CD4-positive, alpha-beta memory T cell (primary cell): ENCODE measurements at regions of chr17 and their contacts with region 1.

Region 1: GRCh38 chr17:17812211-17813057 is 24.4 kb downstream of the SREBF1 start:
- DNase-seq: peak in 4 of 5 donors; percentile 58 to 71 (median 62)
- H3K4me3 ChIP-seq: no peak overlapping the region
- H3K4me3 Mint-ChIP-seq: no peak overlapping the region
- H3K27ac ChIP-seq: peak overlapping the region; percentile 8
- H3K27ac Mint-ChIP-seq: peak overlapping the region in 5 of 7 donors; percentile 24 to 60 (median 53)
- H3K4me1 ChIP-seq: peaks cover 8% of the 10 kb centered on the region
- H3K4me1 Mint-ChIP-seq: peaks cover 0 to 12% (median 2%) of the 10 kb centered on the region in 4 donors
- H3K27me3 ChIP-seq: no peaks in the 10 kb centered on the region
- H3K27me3 Mint-ChIP-seq: no peaks in the 10 kb centered on the region

Region 2: DNA sequence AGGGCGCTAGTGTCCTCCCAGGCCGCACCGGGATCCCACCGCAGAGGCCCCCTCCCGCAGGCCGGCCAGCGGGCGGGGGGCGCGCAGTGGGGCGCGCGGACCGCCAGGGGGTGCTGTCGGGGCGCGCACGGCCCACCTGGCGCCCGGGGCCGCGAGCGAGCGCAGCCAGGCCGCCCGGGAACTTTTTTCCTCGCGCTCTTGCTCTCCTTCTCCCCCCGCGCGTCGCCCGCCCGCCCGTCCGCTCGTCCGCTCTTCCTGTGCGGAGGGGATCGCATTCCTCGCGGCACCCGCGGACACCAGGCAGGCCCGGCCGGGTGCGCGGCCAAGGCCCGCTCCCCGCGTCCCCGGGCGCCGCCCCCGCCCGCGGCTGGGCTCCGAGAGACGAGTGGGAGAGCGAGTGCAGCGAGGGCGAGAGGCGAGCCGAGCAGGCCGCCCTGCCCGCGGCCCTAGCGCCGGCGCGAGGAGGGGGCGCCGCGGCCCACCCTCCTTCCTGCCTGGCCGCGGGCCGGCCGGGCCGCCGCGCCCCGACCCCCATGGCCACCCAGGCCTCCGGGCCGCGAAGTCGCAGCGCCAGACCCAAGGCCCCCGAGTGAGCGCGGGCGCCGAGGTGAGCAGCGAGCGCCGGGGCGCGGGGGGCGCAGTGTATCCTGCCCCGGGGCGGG is 131.1 kb before region 1 on chr17 and contains the start of gene RAI1:
- CTCF ChIA-PET with region 1: interaction called, 9 read pairs
- POLR2A ChIA-PET with region 1: interaction called, 3 read pairs
- intact Hi-C with region 1: loop called (anchors 1 kb)
- DNase-seq: peak; percentile 74 to 81 (median 78)
- H3K4me3 ChIP-seq: peak within 1 kb of the TSS in 1 of 2 donors; percentile 76
- H3K4me3 Mint-ChIP-seq: peak within 1 kb of the TSS; percentile 74 to 90 (median 88)
- H3K27ac ChIP-seq: peak within 1 kb of the TSS; percentile 71
- H3K27ac Mint-ChIP-seq: peak within 1 kb of the TSS; percentile 42 to 91 (median 86)
- H3K4me1 ChIP-seq: peaks cover 27% of the 10 kb centered on the region
- H3K4me1 Mint-ChIP-seq: peaks cover 9 to 38% (median 24%) of the 10 kb centered on the region in 4 donors
- H3K27me3 ChIP-seq: no peaks in the 10 kb centered on the region
- H3K27me3 Mint-ChIP-seq: peaks cover 0 to 5% of the 10 kb centered on the region in 2 donors
- total RNA-seq, gene RAI1: 15.4 to 19.5 TPM

Region 3: GRCh38 chr17:17836250-17836817 is 23.9 kb after region 1 on chr17:
- CTCF ChIA-PET with region 1: interaction called, 17 read pairs
- POLR2A ChIA-PET with region 1: interaction called, 4 read pairs
- intact Hi-C with region 1: loop called (anchors 1 kb)
- DNase-seq: peak; percentile 95 to 98 (median 97)
- H3K4me3 ChIP-seq: peak overlapping the region; percentile 48 to 64
- H3K4me3 Mint-ChIP-seq: peak overlapping the region; percentile 73 to 93 (median 89)
- H3K27ac ChIP-seq: peak overlapping the region; percentile 98
- H3K27ac Mint-ChIP-seq: peak overlapping the region; percentile 95 to 99 (median 98)
- H3K4me1 ChIP-seq: peaks cover 57% of the 10 kb centered on the region
- H3K4me1 Mint-ChIP-seq: peaks cover 35 to 78% (median 62%) of the 10 kb centered on the region in 4 donors
- H3K27me3 ChIP-seq: no peaks in the 10 kb centered on the region
- H3K27me3 Mint-ChIP-seq: no peaks in the 10 kb centered on the region

Region 4: GRCh38 chr17:17859909-17860765 is 47.7 kb after region 1 on chr17:
- CTCF ChIA-PET with region 1: interaction called, 234 read pairs
- POLR2A ChIA-PET with region 1: no interaction called
- intact Hi-C with region 1: loop called (anchors 1 kb)
- DNase-seq: peak; percentile 61 to 75 (median 69)
- H3K4me3 ChIP-seq: no peak overlapping the region
- H3K4me3 Mint-ChIP-seq: no peak overlapping the region
- H3K27ac ChIP-seq: no peak overlapping the region
- H3K27ac Mint-ChIP-seq: peak overlapping the region in 3 of 7 donors; percentile 25 to 56 (median 29)
- H3K4me1 ChIP-seq: peaks cover 22% of the 10 kb centered on the region
- H3K4me1 Mint-ChIP-seq: peaks cover 11 to 44% (median 22%) of the 10 kb centered on the region in 4 donors
- H3K27me3 ChIP-seq: no peaks in the 10 kb centered on the region
- H3K27me3 Mint-ChIP-seq: no peaks in the 10 kb centered on the region

Region 5: DNA sequence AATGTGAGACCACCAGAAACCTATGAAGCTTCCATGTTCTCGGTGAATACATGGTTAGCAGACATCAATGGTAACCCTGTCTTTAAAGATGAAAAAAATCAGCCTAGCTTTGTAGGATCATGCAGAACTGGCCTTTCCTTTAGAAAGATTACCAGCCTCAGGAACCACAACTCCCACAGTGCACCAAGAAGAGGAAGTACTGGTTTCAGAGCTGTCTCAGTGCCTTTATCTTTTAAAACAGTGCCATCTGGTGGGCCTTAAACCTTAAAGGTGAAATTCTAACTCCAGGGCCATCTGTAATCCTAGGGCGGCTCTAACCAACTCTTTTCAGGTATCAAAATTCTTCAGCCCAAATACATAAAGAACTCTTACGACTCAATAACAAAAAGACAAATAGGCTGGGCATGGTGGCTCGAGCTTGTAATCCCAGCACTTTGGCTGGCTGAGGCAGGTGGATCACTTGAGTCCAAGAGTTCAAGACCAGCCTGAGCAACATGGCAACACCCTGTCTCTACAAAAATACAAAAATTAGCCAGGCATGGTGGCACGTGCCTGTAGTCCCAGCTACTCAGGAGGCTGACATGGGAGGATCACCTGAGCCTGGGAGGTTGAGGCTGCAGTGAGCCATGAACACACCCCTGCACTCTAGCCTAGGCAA is 221.1 kb after region 1 on chr17:
- CTCF ChIA-PET with region 1: interaction called, 14 read pairs
- POLR2A ChIA-PET with region 1: no interaction called
- intact Hi-C with region 1: loop called (anchors 1 kb)
- DNase-seq: peak; percentile 72 to 77 (median 74)
- H3K4me3 ChIP-seq: no peak overlapping the region
- H3K4me3 Mint-ChIP-seq: peak overlapping the region in 2 of 8 donors; percentile 12 to 26
- H3K27ac ChIP-seq: no peak overlapping the region
- H3K27ac Mint-ChIP-seq: peak overlapping the region in 6 of 7 donors; percentile 43 to 89 (median 76)
- H3K4me1 ChIP-seq: peaks cover 24% of the 10 kb centered on the region
- H3K4me1 Mint-ChIP-seq: peaks cover 17 to 38% (median 25%) of the 10 kb centered on the region in 4 donors
- H3K27me3 ChIP-seq: no peaks in the 10 kb centered on the region
- H3K27me3 Mint-ChIP-seq: no peaks in the 10 kb centered on the region